ENCODE measurements at regions of chr7 and their contacts with region 1.

Region 1: DNA sequence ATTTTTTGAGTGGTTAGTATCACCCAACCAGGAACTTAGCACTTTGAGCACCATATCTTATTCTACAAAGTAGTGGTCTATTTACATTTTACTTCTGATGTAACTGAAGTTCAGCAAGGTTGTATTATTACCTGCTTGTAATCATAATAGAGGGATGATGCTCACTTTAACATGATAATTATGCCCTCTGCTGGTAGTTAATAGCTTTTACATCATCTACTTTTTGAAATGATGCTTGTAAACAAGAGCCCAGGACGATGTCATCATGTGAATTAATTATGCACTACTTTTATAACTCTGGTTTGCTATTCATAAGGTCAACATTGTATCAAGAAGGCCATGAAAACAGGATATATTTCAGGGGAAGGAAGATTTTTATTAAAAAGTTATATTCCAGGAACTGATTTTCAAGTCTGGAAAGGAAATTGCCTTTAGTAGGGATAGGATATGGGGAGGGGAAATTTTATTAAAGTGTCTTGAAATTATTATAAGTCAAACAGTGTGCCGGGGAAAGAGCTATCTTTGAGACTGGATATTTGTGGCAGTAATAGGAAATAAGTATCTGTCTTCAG is 80.3 kb upstream of the SCIN start:
- DNase-seq: no peak
- ATAC-seq: peak; percentile 75
- H3K4me3 ChIP-seq: no peak overlapping the region
- H3K27ac ChIP-seq: no peak overlapping the region
- H3K4me1 ChIP-seq: no peaks in the 10 kb centered on the region
- H3K27me3 ChIP-seq: no peaks in the 10 kb centered on the region
- CTCF ChIP-seq: peak; percentile 21 to 52 (median 32); a peak in 4 of 6 replicates
- EP300 ChIP-seq: no peak
- POLR2A ChIP-seq: no peak
- RAD21 ChIP-seq: peak; percentile 49

Region 2: GRCh38 chr7:11427686-11428273 is 1062.4 kb before region 1 on chr7:
- CTCF ChIA-PET with region 1: interaction called, 7 read pairs
- POLR2A ChIA-PET with region 1: no interaction called
- RAD21 ChIA-PET with region 1: interaction called, 3 read pairs
- SMC1A ChIA-PET with region 1: no interaction called
- in situ Hi-C with region 1: no loop called
- intact Hi-C with region 1: loop called (anchors 5 kb)
- DNase-seq: no peak
- ATAC-seq: peak; percentile 71
- H3K4me3 ChIP-seq: no peak overlapping the region
- H3K27ac ChIP-seq: no peak overlapping the region
- H3K4me1 ChIP-seq: no peaks in the 10 kb centered on the region
- H3K27me3 ChIP-seq: no peaks in the 10 kb centered on the region
- CTCF ChIP-seq: peak; percentile 53 to 76 (median 55); a peak in 5 of 6 replicates
- EP300 ChIP-seq: no peak
- POLR2A ChIP-seq: no peak
- RAD21 ChIP-seq: peak; percentile 86

Region 3: GRCh38 chr7:12067141-12067831 is 422.9 kb before region 1 on chr7:
- CTCF ChIA-PET with region 1: interaction called, 5 read pairs
- POLR2A ChIA-PET with region 1: no interaction called
- RAD21 ChIA-PET with region 1: no interaction called
- SMC1A ChIA-PET with region 1: interaction called, 4 read pairs
- in situ Hi-C with region 1: loop called (anchors 25 kb)
- intact Hi-C with region 1: loop called (anchors 2 kb)
- DNase-seq: peak; percentile 5
- ATAC-seq: peak; percentile 97
- H3K4me3 ChIP-seq: no peak overlapping the region
- H3K27ac ChIP-seq: no peak overlapping the region
- H3K4me1 ChIP-seq: no peaks in the 10 kb centered on the region
- H3K27me3 ChIP-seq: no peaks in the 10 kb centered on the region
- CTCF ChIP-seq: peak; percentile 57 to 69 (median 67)
- EP300 ChIP-seq: no peak
- POLR2A ChIP-seq: no peak
- RAD21 ChIP-seq: peak; percentile 89

Region 4: GRCh38 chr7:12436896-12437535 is 53.2 kb before region 1 on chr7:
- CTCF ChIA-PET with region 1: interaction called, 16 read pairs
- POLR2A ChIA-PET with region 1: no interaction called
- RAD21 ChIA-PET with region 1: interaction called, 7 read pairs
- SMC1A ChIA-PET with region 1: interaction called, 6 read pairs
- in situ Hi-C with region 1: no loop called
- intact Hi-C with region 1: loop called (anchors 10 kb)
- DNase-seq: no peak
- ATAC-seq: peak; percentile 55; the same call in 1 of the 3 replicates
- H3K4me3 ChIP-seq: no peak overlapping the region
- H3K27ac ChIP-seq: no peak overlapping the region
- H3K4me1 ChIP-seq: no peaks in the 10 kb centered on the region
- H3K27me3 ChIP-seq: no peaks in the 10 kb centered on the region
- CTCF ChIP-seq: peak in 2 of 3 experiments; percentile 9 to 25; a peak in 2 of 6 replicates
- EP300 ChIP-seq: no peak
- POLR2A ChIP-seq: no peak
- RAD21 ChIP-seq: no peak

Region 5: DNA sequence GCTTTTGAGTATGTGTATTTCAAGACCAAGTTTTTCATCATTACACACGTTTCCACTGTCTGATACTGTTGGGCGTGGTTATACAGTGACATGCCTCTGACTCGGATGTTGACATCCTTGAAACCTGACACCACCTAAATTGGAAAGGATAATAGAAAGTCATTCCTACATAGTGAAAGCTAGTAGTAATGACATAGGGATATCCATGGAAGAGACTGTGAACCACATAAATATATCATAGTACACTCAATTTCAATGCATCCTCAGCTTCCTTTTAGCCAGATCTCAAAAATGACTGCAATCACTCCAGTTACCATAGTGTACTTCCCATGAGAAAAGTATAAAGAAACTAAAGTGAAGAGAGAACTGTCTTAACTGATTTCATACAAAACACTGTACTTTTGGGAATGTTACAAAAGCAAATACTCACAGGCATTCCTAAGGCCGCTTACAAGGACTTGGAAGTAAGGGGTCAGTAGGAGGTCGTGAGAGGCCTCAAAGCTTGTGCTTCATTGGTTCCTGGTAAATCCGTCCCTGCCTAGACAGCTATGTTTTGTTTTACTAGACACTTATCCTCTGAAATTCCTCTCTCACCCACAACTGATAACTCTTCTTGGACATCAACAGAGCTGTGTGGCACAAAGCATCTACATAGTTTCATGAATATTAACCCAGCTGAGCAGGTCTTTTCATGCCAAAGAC is 14.7 kb before region 1 on chr7:
- CTCF ChIA-PET with region 1: interaction called, 16 read pairs
- POLR2A ChIA-PET with region 1: no interaction called
- RAD21 ChIA-PET with region 1: no interaction called
- SMC1A ChIA-PET with region 1: interaction called, 7 read pairs
- in situ Hi-C with region 1: no loop called
- intact Hi-C with region 1: no loop called
- DNase-seq: no peak
- ATAC-seq: no peak
- H3K4me3 ChIP-seq: no peak overlapping the region
- H3K27ac ChIP-seq: no peak overlapping the region
- H3K4me1 ChIP-seq: no peaks in the 10 kb centered on the region
- H3K27me3 ChIP-seq: no peaks in the 10 kb centered on the region
- CTCF ChIP-seq: no peak
- EP300 ChIP-seq: no peak
- POLR2A ChIP-seq: no peak
- RAD21 ChIP-seq: no peak

Region 6: GRCh38 chr7:12567015-12567414 is 76.8 kb after region 1 on chr7:
- CTCF ChIA-PET with region 1: no interaction called
- POLR2A ChIA-PET with region 1: no interaction called
- RAD21 ChIA-PET with region 1: no interaction called
- SMC1A ChIA-PET with region 1: no interaction called
- in situ Hi-C with region 1: no loop called
- intact Hi-C with region 1: no loop called
- DNase-seq: peak; percentile 34
- ATAC-seq: peak; percentile 79
- H3K4me3 ChIP-seq: no peak overlapping the region
- H3K27ac ChIP-seq: no peak overlapping the region
- H3K4me1 ChIP-seq: peaks cover 16% of the 10 kb centered on the region
- H3K27me3 ChIP-seq: peaks cover 3 to 8% of the 10 kb centered on the region in 2 experiments; a peak in 3 of 4 replicates
- CTCF ChIP-seq: no peak
- EP300 ChIP-seq: no peak
- POLR2A ChIP-seq: no peak
- RAD21 ChIP-seq: no peak